Activated naive CD4-positive, alpha-beta T cell treated with anti-CD3 and anti-CD28 coated beads for 36 hours (primary cell): ENCODE measurements at regions of chr20 and their contacts with region 1.

Region 1: DNA sequence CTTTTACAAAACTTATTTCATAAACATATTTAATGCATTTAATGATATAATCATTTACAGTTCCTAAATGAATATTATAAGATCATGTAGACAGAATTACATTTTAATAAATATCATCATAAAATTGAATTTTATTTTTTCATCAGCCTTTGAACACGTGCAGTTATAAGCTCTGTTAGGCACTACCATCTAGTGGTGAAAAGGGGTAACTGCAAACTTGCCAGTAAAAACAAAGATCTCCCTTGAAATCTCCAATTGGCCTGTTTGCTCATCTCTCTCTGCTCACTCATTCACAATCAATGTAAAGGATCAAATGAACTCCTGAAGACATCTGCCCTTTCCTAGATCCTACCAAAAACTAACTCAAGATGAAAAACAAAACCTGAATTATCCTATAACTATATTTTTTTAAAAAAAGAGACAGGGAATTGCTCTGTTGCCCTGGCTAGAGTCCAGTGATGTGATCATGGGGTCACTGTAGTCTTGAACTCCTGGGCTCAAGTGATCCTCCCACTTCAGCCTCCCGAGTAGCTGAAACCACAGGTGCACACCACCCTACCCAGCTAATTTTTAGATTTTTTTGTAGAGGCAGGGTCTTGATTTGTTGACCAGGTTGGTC is 31.7 kb downstream of the SAMHD1 start:
- DNase-seq: peak; percentile 43
- H3K4me3 Mint-ChIP-seq: no peak overlapping the region
- H3K27ac Mint-ChIP-seq: peak overlapping the region; percentile 67
- H3K4me1 Mint-ChIP-seq: peaks cover 17% of the 10 kb centered on the region
- H3K27me3 Mint-ChIP-seq: no peaks in the 10 kb centered on the region

Region 2: DNA sequence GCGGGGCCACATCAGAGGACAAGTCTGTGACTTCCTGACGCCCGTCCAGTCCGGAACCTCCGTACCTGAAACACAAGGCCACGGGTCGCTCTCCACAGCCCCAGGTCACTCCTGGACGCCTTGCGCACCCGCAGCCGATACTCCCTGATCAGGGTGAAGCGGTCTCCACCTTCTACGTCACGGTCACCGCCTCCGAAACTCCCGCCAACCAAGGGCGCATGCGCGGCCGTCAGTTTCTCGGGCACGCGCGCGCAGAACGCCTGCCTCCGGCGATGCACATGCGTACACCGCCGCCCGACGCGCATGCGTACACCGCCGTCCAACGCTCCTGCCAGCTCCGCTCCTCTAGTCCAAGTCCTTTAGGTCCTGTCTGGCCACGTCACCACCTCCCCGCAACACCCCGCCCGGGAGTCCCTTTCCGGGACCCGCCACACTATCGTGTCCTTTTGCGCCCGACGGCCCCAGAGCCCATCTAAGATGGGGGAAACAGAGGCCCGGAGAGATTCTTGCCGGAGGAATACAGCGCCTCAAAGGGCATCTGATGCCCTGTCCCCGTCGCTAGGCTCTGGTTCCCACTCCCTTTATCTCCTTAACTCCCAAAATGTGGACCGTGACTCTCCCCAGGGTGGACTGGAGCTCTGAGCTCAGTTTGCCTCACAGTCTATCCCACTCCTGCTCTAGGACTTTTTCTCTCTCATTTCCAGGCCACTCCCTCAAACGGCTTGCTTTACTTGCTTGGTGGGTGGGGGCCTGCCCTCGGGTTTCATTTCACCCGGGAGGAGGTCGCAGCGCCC is 146.0 kb before region 1 on chr20 and contains the start of gene DSN1:
- CTCF ChIA-PET with region 1: no interaction called
- intact Hi-C with region 1: loop called (anchors 2 kb)
- DNase-seq: peak; percentile 98
- H3K4me3 Mint-ChIP-seq: peak within 1 kb of the TSS; percentile 97
- H3K27ac Mint-ChIP-seq: peak within 1 kb of the TSS; percentile 97
- H3K4me1 Mint-ChIP-seq: peaks cover 21% of the 10 kb centered on the region
- H3K27me3 Mint-ChIP-seq: no peaks in the 10 kb centered on the region
- total RNA-seq, gene DSN1: 23.0 to 24.7 TPM

Region 3: DNA sequence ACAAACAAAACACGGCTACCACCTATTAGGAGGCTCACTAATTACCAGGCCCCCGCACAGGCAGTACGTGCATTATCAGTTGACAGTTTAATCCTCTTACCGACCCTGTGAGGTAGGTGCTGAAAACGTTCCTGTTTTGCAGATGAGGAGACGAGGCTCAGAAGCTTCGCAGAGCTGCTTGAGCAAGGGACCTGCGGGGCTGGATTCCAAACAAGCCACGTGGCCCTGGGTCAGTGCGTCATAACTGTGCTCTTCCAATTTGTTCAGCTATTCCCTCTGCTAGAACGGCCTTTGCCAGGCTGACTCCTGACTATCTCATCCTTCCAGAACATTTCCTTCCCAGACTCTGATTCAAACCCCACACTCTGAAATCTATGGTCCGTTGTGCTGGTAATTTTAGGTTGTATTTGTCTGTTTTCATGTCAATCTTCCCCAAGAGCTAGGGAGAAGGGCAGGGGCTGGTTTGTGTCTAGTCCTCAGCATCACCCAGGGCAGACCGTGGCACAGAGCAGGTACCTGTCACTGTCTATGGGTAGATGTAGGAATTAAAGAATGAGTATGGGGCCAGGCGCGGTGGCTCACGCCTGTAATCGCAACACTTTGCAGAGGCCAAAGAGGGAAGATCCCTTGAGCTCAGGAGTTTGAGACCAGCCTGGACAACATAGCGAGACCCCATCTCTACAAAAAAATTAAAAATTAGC is 72.7 kb before region 1 on chr20:
- CTCF ChIA-PET with region 1: no interaction called
- intact Hi-C with region 1: no loop called
- DNase-seq: no peak
- H3K4me3 Mint-ChIP-seq: no peak overlapping the region
- H3K27ac Mint-ChIP-seq: peak overlapping the region; percentile 21
- H3K4me1 Mint-ChIP-seq: peaks cover 12% of the 10 kb centered on the region
- H3K27me3 Mint-ChIP-seq: no peaks in the 10 kb centered on the region

Region 4: GRCh38 chr20:36908603-36909002 is 11.2 kb before region 1 on chr20:
- CTCF ChIA-PET with region 1: interaction called, 36 read pairs
- intact Hi-C with region 1: no loop called
- DNase-seq: no peak
- H3K4me3 Mint-ChIP-seq: no peak overlapping the region
- H3K27ac Mint-ChIP-seq: no peak overlapping the region
- H3K4me1 Mint-ChIP-seq: peaks cover 16% of the 10 kb centered on the region
- H3K27me3 Mint-ChIP-seq: no peaks in the 10 kb centered on the region

Region 5: DNA sequence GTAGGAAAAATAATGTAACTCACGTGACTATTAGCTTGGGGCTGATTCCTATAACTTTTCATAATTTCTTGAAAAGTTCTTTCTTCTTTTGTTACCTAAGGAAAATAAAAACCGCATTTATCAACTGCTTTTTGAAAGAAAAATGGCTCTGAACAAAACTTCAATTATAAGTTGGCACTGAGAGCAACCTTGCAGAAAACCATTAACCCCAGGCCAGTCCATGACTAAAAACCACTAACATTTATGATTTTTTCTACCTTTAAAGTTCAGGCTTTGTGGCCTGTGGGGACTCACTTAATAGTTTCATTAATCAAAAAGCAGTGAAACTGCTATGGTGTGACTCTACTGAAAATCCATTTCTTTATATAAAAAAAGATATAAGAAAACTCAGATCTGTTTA is 100.8 kb after region 1 on chr20:
- CTCF ChIA-PET with region 1: no interaction called
- intact Hi-C with region 1: no loop called
- DNase-seq: no peak
- H3K4me3 Mint-ChIP-seq: no peak overlapping the region
- H3K27ac Mint-ChIP-seq: no peak overlapping the region
- H3K4me1 Mint-ChIP-seq: peaks cover 24% of the 10 kb centered on the region
- H3K27me3 Mint-ChIP-seq: no peaks in the 10 kb centered on the region

Region 6: DNA sequence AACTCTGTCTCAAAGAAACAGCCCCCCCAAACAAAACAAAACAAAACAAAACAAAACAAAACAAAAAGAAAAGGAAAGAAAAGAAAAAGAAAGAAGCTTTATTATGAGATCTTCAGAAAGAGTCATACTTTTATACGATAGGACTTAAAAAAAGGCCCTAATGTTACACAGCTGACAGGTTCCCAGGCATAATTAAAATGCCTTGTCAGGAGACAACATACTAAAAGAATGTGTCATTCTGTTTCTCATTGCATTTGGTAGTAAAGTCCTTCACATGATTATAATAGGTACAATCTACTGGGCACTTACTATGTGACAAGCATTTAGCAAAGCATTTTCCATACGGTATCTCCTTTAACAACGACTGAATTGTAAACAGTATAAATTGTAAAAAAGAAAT is 222.9 kb after region 1 on chr20:
- CTCF ChIA-PET with region 1: no interaction called
- intact Hi-C with region 1: no loop called
- DNase-seq: no peak
- H3K4me3 Mint-ChIP-seq: no peak overlapping the region
- H3K27ac Mint-ChIP-seq: no peak overlapping the region
- H3K4me1 Mint-ChIP-seq: no peaks in the 10 kb centered on the region
- H3K27me3 Mint-ChIP-seq: no peaks in the 10 kb centered on the region